AG04449 (cell line): ENCODE measurements at regions of chr12 and their contacts with region 1.

Region 1: DNA sequence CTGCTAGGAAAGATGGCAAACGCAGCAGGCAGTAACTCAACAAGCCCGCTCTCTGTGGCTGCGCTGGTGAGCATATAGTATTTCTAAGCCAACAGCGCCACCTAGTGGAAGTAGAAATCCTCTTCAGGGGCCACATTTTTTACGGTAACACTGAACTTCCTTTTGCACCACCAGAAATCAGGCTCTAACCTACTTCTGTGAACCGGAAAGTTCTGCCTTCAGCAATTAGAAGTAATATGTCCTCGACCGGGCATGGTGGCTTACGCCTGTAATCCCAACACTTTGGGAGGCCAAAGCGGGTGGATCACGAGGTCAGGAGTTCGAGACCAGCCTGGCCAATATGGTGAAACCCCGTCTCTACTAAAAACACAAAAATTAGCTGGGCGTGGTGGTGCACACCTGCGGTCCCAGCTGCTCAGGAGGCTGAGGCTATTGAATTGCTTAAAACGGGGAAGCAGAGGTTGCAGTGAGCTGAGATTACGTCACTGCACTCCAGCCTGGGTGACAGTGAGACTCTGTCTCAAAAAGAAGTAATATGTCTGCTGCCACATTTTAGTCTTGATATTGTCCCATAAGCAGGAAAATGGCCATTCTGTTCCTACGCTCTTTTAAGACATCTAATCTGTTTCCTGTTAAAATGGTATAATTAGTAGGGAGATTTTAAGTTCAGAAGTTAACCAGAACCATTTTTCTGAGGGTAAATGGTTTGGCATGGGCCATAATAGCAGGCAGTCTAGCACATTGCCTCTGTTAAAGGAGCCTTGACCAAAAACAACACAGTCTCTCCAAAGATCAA is 26.8 kb downstream of the APOBEC1 start:
- DNase-seq: peak; percentile 12
- H3K4me3 ChIP-seq: no peak overlapping the region
- CTCF ChIP-seq: peak; percentile 63

Region 2: GRCh38 chr12:7219599-7220243 is 419.2 kb before region 1 on chr12:
- CTCF ChIA-PET with region 1: interaction called, 105 read pairs
- POLR2A ChIA-PET with region 1: no interaction called
- DNase-seq: peak; percentile 37
- H3K4me3 ChIP-seq: no peak overlapping the region
- CTCF ChIP-seq: peak; percentile 69

Region 3: DNA sequence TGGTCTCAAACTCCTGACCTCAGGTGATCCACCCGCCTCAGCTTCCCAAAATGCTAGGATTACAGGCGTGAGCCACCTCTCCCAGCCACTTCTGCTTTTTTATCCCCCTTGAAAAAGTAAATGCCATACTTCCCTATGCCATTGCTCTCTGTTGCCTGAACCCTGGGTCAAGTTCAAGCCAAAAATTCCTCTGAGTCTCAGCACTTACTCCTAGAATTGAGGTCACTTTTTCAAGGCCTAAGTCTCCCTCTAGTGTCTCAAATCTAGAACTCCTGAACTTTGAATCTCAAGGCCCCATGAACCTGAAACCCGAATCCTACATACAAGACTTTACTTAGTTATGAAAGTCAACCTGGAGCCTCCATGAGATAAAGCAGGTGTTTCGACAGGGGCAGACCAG is 28.2 kb after region 1 on chr12:
- CTCF ChIA-PET with region 1: no interaction called
- POLR2A ChIA-PET with region 1: no interaction called
- DNase-seq: no peak
- H3K4me3 ChIP-seq: no peak overlapping the region
- CTCF ChIP-seq: peak; percentile 3

Region 4: GRCh38 chr12:7716381-7716780 is 77.4 kb after region 1 on chr12:
- CTCF ChIA-PET with region 1: no interaction called
- POLR2A ChIA-PET with region 1: no interaction called
- DNase-seq: no peak
- H3K4me3 ChIP-seq: no peak overlapping the region
- CTCF ChIP-seq: no peak